A549 (cell line): ENCODE measurements at regions of chr1 and their contacts with region 1.

Region 1: GRCh38 chr1:199684686-199685273 is 342.7 kb upstream of the NR5A2 start:
- DNase-seq: peak; percentile 56 to 82
- ATAC-seq: peak; percentile 94 to 95
- H3K4me3 ChIP-seq: no peak overlapping the region
- H3K27ac ChIP-seq: peak overlapping the region; percentile 66 to 73
- H3K4me1 ChIP-seq: peaks cover 47% of the 10 kb centered on the region
- CTCF ChIP-seq: peak; percentile 94
- EP300 ChIP-seq: no peak
- POLR2A ChIP-seq: no peak
- RAD21 ChIP-seq: peak; percentile 97 to 98

Region 2: GRCh38 chr1:199394856-199395255 is 289.9 kb before region 1 on chr1:
- CTCF ChIA-PET with region 1: no interaction called
- POLR2A ChIA-PET with region 1: no interaction called
- DNase-seq: no peak
- ATAC-seq: no peak
- H3K4me3 ChIP-seq: no peak overlapping the region
- H3K27ac ChIP-seq: no peak overlapping the region
- H3K4me1 ChIP-seq: no peaks in the 10 kb centered on the region
- CTCF ChIP-seq: no peak
- EP300 ChIP-seq: no peak
- POLR2A ChIP-seq: no peak
- RAD21 ChIP-seq: no peak

Region 3: GRCh38 chr1:199646761-199647160 is 38.0 kb before region 1 on chr1:
- CTCF ChIA-PET with region 1: no interaction called
- POLR2A ChIA-PET with region 1: no interaction called
- DNase-seq: peak in 1 of 2 experiments; percentile 10
- ATAC-seq: peak; percentile 29 to 39; a peak in 1 of 6 replicates
- H3K4me3 ChIP-seq: no peak overlapping the region
- H3K27ac ChIP-seq: 0 out of 6 replicates have a peak overlapping the region, but pooled peaks of 1 of the 2 experiments have one; percentile 13
- H3K4me1 ChIP-seq: peaks cover 4% of the 10 kb centered on the region; the same call in 1 of the 3 replicates
- CTCF ChIP-seq: no peak
- EP300 ChIP-seq: no peak
- POLR2A ChIP-seq: no peak
- RAD21 ChIP-seq: no peak

Region 4: GRCh38 chr1:200029035-200029821 is 344.4 kb after region 1 on chr1:
- CTCF ChIA-PET with region 1: interaction called, 10 read pairs
- POLR2A ChIA-PET with region 1: interaction called, 5 read pairs
- DNase-seq: peak; percentile 67 to 72
- ATAC-seq: peak; percentile 79 to 83
- H3K4me3 ChIP-seq: peak overlapping the region; percentile 48
- H3K27ac ChIP-seq: peak overlapping the region; percentile 73 to 93
- H3K4me1 ChIP-seq: peaks cover 29% of the 10 kb centered on the region
- CTCF ChIP-seq: no peak
- EP300 ChIP-seq: no peak
- POLR2A ChIP-seq: no peak; the same call in none of the 2 replicates
- RAD21 ChIP-seq: 0 out of 5 replicates have a peak, but pooled peaks of 1 of the 2 experiments have one; percentile 14

Region 5: GRCh38 chr1:200038981-200039848 is 354.4 kb after region 1 on chr1:
- CTCF ChIA-PET with region 1: interaction called, 11 read pairs
- POLR2A ChIA-PET with region 1: no interaction called
- DNase-seq: peak; percentile 41 to 71
- ATAC-seq: peak; percentile 67 to 74
- H3K4me3 ChIP-seq: peak overlapping the region; percentile 47
- H3K27ac ChIP-seq: peak overlapping the region; percentile 76 to 91
- H3K4me1 ChIP-seq: peaks cover 30% of the 10 kb centered on the region; the same call in 2 of the 3 replicates
- CTCF ChIP-seq: no peak
- EP300 ChIP-seq: no peak
- POLR2A ChIP-seq: peak; percentile 6; the same call in 1 of the 2 replicates
- RAD21 ChIP-seq: 0 out of 5 replicates have a peak, but pooled peaks of 1 of the 2 experiments have one; percentile 12

Region 6: GRCh38 chr1:200510228-200510623 is 825.4 kb after region 1 on chr1:
- CTCF ChIA-PET with region 1: interaction called, 19 read pairs
- POLR2A ChIA-PET with region 1: no interaction called
- DNase-seq: peak; percentile 86 to 89
- ATAC-seq: peak; percentile 95 to 99
- H3K4me3 ChIP-seq: no peak overlapping the region
- H3K27ac ChIP-seq: no peak overlapping the region
- H3K4me1 ChIP-seq: peaks cover 7% of the 10 kb centered on the region; the same call in 1 of the 3 replicates
- CTCF ChIP-seq: peak; percentile 95
- EP300 ChIP-seq: no peak
- POLR2A ChIP-seq: no peak
- RAD21 ChIP-seq: peak; percentile 96 to 97